ENCODE measurements at regions of chr1 and their contacts with region 1.

Region 1: GRCh38 chr1:37458528-37458927 is 15.9 kb upstream of the ZC3H12A start:
- DNase-seq: no peak
- CTCF ChIP-seq: peak; percentile 13

Region 2: GRCh38 chr1:37096466-37096865 is 362.1 kb before region 1 on chr1:
- CTCF ChIA-PET with region 1: no interaction called
- POLR2A ChIA-PET with region 1: no interaction called
- DNase-seq: peak; percentile 33
- CTCF ChIP-seq: no peak

Region 3: GRCh38 chr1:37294529-37294928 is 164.0 kb before region 1 on chr1:
- CTCF ChIA-PET with region 1: no interaction called
- POLR2A ChIA-PET with region 1: no interaction called
- DNase-seq: no peak
- CTCF ChIP-seq: no peak

Region 4: DNA sequence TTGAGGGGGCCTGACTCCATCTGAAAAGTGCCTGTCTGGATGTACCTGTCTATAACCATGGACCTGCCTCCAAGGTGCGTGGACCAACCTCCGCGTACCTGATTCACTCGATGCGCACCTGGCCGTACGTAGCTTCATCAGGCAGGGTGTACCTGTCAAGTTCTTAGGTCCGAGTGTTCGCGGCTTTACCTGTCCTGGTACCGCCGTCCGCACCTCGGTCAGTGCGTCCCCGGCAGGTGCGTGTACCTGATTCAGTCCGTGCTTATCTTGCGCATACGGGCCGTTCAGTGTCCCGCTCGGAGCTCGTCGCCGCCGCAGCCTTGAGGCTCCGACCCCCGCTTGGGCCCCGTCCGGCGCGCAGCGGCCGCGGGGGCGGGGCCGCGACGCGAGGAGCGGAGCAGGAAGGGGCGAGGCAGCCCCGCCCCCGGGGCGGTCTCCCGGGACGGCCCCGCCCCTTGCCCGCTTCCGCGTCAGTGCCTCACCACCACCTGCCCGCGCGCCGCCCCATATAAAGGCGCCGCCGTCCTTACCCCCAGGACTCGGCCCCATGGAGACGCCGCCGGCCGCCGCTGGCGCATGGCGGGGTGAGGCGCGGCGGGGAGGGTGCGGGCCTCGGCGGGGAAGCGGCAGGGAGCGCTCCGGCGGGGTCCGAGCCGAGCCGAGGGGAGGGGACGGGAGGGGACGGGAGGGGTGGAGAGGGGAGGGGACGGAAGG is 15.7 kb after region 1 on chr1 and contains the start of gene ZC3H12A:
- CTCF ChIA-PET with region 1: interaction called, 105 read pairs
- POLR2A ChIA-PET with region 1: interaction called, 3 read pairs
- DNase-seq: peak; percentile 99
- CTCF ChIP-seq: no peak